ENCODE measurements at regions of chr2 and their contacts with region 1.

Region 1: DNA sequence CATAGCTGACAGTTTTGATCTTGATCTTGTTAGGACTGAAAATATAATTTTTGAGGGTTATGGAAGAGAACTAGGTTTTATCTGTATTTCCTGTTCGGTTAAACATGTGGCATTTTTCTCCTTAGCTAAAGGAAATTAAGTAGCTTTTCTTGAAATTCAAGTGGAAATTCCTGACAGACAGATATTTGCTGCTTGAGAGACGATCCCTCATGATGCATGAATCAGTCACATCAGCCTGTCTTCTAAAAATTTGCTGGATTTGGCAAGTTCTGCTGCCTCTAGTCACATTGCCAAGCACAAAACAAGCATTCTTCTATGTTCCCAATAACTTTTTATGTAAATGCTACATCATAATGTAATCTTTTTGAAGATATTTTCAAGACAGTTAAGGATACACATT is 201.8 kb upstream of the ATP5MC3 start:
- DNase-seq: no peak
- H3K4me3 ChIP-seq: no peak overlapping the region
- H3K27ac ChIP-seq: no peak overlapping the region
- H3K4me1 ChIP-seq: no peaks in the 10 kb centered on the region
- H3K27me3 ChIP-seq: peaks cover 3% of the 10 kb centered on the region
- CTCF ChIP-seq: no peak
- EP300 ChIP-seq: no peak
- POLR2A ChIP-seq: no peak

Region 2: GRCh38 chr2:175552902-175553301 is 169.6 kb after region 1 on chr2:
- in situ Hi-C with region 1: no loop called
- intact Hi-C with region 1: loop called (anchors 5 kb)
- DNase-seq: no peak
- H3K4me3 ChIP-seq: no peak overlapping the region
- H3K27ac ChIP-seq: no peak overlapping the region
- H3K4me1 ChIP-seq: no peaks in the 10 kb centered on the region
- H3K27me3 ChIP-seq: no peaks in the 10 kb centered on the region
- CTCF ChIP-seq: no peak
- EP300 ChIP-seq: no peak
- POLR2A ChIP-seq: no peak

Measured in transverse colon (tissue), 4 donors.